ENCODE measurements at regions of chr3 and their contacts with region 1.

Region 1: DNA sequence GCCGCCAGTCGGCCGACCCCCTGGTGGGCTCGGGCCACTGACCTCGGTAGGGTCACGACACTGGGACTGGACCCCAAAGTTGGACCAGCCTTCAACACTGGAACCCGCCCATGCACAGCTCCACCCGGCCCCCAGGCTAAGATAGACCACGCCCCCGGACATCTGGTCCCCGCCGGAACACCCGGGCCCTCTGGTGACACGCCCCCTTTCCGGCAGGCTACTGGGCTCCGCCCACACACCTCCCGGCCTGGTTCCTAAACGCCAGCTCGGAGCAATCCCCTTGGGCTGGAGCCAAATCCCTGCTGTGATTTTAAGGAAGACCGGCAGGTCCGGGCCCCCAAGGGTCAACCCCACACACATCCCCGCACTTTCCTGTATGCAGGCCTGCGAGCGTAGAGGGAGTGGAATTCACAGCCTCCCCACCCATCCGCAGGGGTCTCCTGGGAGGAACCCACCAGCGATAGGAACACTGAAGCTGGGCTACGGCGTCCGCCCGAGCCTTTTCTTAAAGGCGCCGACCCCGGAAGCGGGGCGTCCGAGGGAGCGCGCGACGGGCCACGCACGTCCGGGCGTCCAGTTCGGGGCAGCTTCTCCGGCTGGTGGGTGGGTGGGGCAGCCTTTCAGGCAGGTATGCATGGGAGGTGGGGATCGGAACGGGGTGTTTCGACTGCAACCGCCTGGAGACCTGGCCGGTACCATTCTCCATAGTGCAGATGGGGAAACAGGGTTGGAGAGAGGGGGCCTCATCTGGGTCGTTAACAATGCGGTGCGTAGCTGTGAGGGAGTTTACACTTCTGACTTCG is at the start of gene HEMK1:
- DNase-seq: peak; percentile 96
- ATAC-seq: peak; percentile 77
- H3K4me3 ChIP-seq: peak within 1 kb of the TSS; percentile 69 to 93 (median 80)
- H3K4me3 Mint-ChIP-seq: peak within 1 kb of the TSS; percentile 98
- H3K27ac ChIP-seq: peak within 1 kb of the TSS; percentile 77 to 82
- H3K27ac Mint-ChIP-seq: peak within 1 kb of the TSS; percentile 96
- H3K4me1 ChIP-seq: peaks cover 16 to 39% of the 10 kb centered on the region in 2 donors
- H3K4me1 Mint-ChIP-seq: peaks cover 35% of the 10 kb centered on the region
- H3K27me3 ChIP-seq: no peaks in the 10 kb centered on the region
- H3K27me3 Mint-ChIP-seq: no peaks in the 10 kb centered on the region
- CTCF ChIP-seq: no peak
- total RNA-seq, gene HEMK1: 43.0 and 43.5 TPM in 2 replicates

Region 2: DNA sequence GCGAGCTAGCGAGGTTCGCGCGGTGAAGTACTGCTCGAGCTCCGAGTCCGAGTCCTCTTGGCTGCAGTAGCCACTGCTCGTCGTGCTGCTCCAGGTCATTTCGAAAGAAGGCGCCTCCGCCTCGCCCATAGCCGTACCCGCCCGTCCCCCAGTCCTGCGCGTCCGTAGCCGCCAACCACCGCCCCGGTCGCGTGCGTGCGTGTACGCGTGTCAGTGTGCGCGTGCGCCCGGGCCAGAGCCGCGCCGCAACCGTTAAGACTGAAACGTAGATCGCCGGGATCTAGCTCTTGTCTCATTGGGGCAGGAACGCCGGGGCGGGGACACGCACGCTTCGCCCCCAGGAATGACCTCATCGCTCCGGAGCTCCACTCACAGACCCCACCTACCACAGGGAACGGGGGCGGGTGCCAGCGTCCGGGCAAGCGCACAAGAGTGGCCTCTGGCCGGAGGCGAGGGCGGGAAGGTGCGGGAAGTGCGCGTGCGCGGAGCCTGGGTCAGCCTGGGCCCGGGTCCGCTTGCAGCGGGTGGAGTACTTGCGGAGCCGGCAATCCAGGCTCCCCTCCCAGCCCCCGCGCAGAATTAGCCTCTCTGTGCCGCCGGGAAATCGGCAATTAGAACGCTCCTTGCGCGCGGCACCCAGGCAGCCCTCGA is 231.8 kb before region 1 on chr3:
- CTCF ChIA-PET with region 1: no interaction called
- POLR2A ChIA-PET with region 1: interaction called, 14 read pairs
- intact Hi-C with region 1: no loop called
- DNase-seq: peak; percentile 97
- ATAC-seq: peak; percentile 84
- H3K4me3 ChIP-seq: peak overlapping the region; percentile 39 to 86 (median 68)
- H3K4me3 Mint-ChIP-seq: peak overlapping the region; percentile 96
- H3K27ac ChIP-seq: peak overlapping the region; percentile 97 to 98
- H3K27ac Mint-ChIP-seq: peak overlapping the region; percentile 99
- H3K4me1 ChIP-seq: peaks cover 37 to 74% of the 10 kb centered on the region in 2 donors
- H3K4me1 Mint-ChIP-seq: peaks cover 55% of the 10 kb centered on the region
- H3K27me3 ChIP-seq: no peaks in the 10 kb centered on the region
- H3K27me3 Mint-ChIP-seq: no peaks in the 10 kb centered on the region
- CTCF ChIP-seq: no peak

Region 3: DNA sequence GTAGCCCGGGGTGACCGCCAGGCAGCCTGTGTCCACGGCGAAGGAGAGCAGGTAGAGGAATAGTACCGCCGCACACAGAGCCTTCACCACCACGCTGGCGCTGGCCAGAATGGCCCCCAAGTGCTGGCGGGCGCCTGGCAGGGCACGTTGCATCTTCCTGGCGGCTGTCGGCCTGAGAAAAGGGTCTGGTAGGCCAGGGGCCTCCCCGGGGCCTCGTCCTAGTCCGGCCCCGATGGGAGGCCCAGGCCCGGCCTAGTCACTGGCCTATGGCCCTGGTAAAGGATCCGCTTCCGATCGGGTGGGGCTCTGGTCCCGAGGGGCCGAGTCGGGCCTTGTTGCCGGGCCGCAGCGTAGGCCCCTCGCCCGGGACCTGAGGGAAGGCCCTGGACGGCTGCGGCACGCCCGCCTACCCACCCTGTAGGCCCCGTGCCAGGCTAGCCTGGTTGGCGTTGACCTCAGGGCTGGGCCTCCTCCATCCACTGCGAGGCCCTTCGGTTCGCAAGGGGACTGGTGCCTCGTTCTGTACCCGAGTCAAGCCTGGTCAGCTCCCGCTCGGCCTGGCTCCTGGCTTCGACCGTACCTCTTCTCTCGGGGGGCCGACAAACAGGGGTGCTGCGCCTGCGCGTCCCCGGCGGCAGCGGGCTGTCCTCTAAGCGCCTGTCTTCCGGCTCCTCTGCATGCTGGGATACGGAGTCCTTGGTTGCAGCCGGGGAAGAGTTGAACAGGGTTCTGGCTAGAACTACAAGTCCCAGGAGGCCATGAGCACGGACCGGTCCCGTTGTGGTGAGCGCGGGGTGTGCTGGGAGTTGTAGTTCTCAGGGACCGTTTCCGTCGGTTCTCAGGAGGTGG is 210.0 kb before region 1 on chr3 and contains the start of gene TMEM115:
- CTCF ChIA-PET with region 1: no interaction called
- POLR2A ChIA-PET with region 1: no interaction called
- intact Hi-C with region 1: loop called (anchors 1 kb)
- DNase-seq: peak; percentile 96
- ATAC-seq: peak; percentile 100
- H3K4me3 ChIP-seq: peak within 1 kb of the TSS; percentile 19 to 93 (median 85)
- H3K4me3 Mint-ChIP-seq: peak within 1 kb of the TSS; percentile 99
- H3K27ac ChIP-seq: peak within 1 kb of the TSS; percentile 60 to 81
- H3K27ac Mint-ChIP-seq: peak within 1 kb of the TSS; percentile 96
- H3K4me1 ChIP-seq: peaks cover 28 to 40% of the 10 kb centered on the region in 2 donors
- H3K4me1 Mint-ChIP-seq: peaks cover 50% of the 10 kb centered on the region
- H3K27me3 ChIP-seq: no peaks in the 10 kb centered on the region
- H3K27me3 Mint-ChIP-seq: no peaks in the 10 kb centered on the region
- CTCF ChIP-seq: no peak
- total RNA-seq, gene TMEM115: 26.2 and 27.2 TPM in 2 replicates

Region 4: GRCh38 chr3:50519471-50520089 is 49.6 kb before region 1 on chr3:
- CTCF ChIA-PET with region 1: interaction called, 3 read pairs
- POLR2A ChIA-PET with region 1: interaction called, 3 read pairs
- intact Hi-C with region 1: loop called (anchors 5 kb)
- DNase-seq: peak; percentile 74
- ATAC-seq: peak; percentile 58
- H3K4me3 ChIP-seq: no peak overlapping the region
- H3K4me3 Mint-ChIP-seq: no peak overlapping the region
- H3K27ac ChIP-seq: no peak overlapping the region
- H3K27ac Mint-ChIP-seq: peak overlapping the region; percentile 33
- H3K4me1 ChIP-seq: peaks cover 26 to 34% of the 10 kb centered on the region in 2 donors
- H3K4me1 Mint-ChIP-seq: peaks cover 32% of the 10 kb centered on the region
- H3K27me3 ChIP-seq: peaks cover 0 to 4% (median 0%) of the 10 kb centered on the region in 4 experiments
- H3K27me3 Mint-ChIP-seq: peaks cover 5% of the 10 kb centered on the region
- CTCF ChIP-seq: peak; percentile 89

Region 5: GRCh38 chr3:50652709-50653108 is 83.6 kb after region 1 on chr3:
- CTCF ChIA-PET with region 1: interaction called, 31 read pairs
- POLR2A ChIA-PET with region 1: interaction called, 3 read pairs
- intact Hi-C with region 1: loop called (anchors 1 kb)
- DNase-seq: peak; percentile 56
- ATAC-seq: peak; percentile 68
- H3K4me3 ChIP-seq: no peak overlapping the region
- H3K4me3 Mint-ChIP-seq: no peak overlapping the region
- H3K27ac ChIP-seq: no peak overlapping the region
- H3K27ac Mint-ChIP-seq: no peak overlapping the region
- H3K4me1 ChIP-seq: no peaks in the 10 kb centered on the region
- H3K4me1 Mint-ChIP-seq: no peaks in the 10 kb centered on the region
- H3K27me3 ChIP-seq: no peaks in the 10 kb centered on the region
- H3K27me3 Mint-ChIP-seq: no peaks in the 10 kb centered on the region
- CTCF ChIP-seq: peak; percentile 27

Region 6: DNA sequence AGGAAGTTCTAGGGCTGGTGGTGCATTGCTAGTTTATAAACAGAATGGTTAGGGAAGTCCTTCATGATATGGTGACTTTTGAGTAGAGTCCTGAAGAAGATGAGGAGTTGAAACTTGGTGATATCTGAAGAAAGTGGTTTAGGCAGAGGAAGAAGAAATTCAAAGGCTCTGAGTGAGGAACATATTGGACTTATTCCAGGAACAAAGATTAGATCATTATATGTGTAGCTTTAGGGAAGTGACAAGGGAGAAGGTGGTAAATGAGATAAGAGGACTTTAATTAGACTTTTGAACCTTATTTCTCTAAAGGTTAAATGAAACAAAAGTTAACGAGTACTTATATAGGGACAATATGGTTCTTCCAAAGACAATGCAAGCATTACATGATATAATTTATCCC is 392.2 kb after region 1 on chr3:
- CTCF ChIA-PET with region 1: no interaction called
- POLR2A ChIA-PET with region 1: no interaction called
- intact Hi-C with region 1: no loop called
- DNase-seq: no peak
- ATAC-seq: no peak
- H3K4me3 ChIP-seq: no peak overlapping the region
- H3K4me3 Mint-ChIP-seq: no peak overlapping the region
- H3K27ac ChIP-seq: no peak overlapping the region
- H3K27ac Mint-ChIP-seq: no peak overlapping the region
- H3K4me1 ChIP-seq: no peaks in the 10 kb centered on the region
- H3K4me1 Mint-ChIP-seq: no peaks in the 10 kb centered on the region
- H3K27me3 ChIP-seq: peaks cover 0 to 12% (median 2%) of the 10 kb centered on the region in 4 experiments
- H3K27me3 Mint-ChIP-seq: peaks cover 25% of the 10 kb centered on the region
- CTCF ChIP-seq: no peak

Region 7: GRCh38 chr3:50978991-50979667 is 410.0 kb after region 1 on chr3:
- CTCF ChIA-PET with region 1: no interaction called
- POLR2A ChIA-PET with region 1: no interaction called
- intact Hi-C with region 1: no loop called
- DNase-seq: no peak
- ATAC-seq: no peak
- H3K4me3 ChIP-seq: no peak overlapping the region
- H3K4me3 Mint-ChIP-seq: no peak overlapping the region
- H3K27ac ChIP-seq: no peak overlapping the region
- H3K27ac Mint-ChIP-seq: no peak overlapping the region
- H3K4me1 ChIP-seq: no peaks in the 10 kb centered on the region
- H3K4me1 Mint-ChIP-seq: no peaks in the 10 kb centered on the region
- H3K27me3 ChIP-seq: peaks cover 0 to 4% (median 2%) of the 10 kb centered on the region in 4 experiments
- H3K27me3 Mint-ChIP-seq: peaks cover 31% of the 10 kb centered on the region
- CTCF ChIP-seq: no peak

Region 8: DNA sequence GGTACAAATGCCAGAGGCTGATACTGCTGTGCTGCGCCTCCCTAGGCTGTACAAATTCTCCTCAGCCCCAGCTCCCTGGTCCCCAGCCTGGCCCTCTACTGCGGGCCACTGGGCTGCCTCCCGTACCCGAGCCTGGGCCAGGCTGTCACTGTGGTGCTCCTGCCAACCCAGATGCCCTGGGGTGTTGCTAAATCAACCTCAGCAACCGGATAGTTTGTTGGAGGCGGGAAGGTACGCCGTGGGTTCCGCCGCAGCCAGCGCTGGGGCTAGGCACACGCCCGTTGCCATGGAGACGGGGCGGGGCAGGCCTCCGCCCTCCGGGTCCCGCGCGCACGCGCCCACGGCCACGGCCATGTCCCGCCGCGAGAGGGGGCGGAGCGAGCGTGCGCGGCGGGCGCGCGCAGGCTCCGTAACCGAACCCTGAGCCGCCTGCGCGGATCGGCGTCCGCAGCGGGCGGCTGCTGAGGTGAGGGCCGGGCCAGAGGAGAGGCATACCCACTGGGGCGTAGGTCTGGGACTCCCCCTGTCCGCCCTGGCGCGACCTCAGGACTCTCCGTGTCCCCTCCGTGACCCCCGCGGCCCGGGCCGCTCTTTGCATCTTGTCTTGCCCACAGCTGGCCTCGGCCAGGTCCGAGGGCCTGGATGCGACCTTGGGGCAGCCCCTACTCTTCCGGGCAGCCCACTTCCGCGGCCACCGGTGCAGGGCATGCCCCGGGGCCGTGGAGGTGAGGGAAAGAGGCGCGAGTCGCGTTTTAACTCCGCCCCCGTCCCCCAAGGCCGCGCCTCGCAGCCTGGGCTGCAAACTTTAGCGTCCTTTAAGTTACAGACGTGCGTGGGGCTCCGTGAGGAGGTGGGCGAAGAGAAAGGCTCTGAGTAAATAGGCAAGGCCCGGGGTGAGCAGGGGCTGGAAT is 1101.9 kb after region 1 on chr3 and contains the start of gene TEX264:
- CTCF ChIA-PET with region 1: no interaction called
- POLR2A ChIA-PET with region 1: no interaction called
- intact Hi-C with region 1: loop called (anchors 1 kb)
- DNase-seq: peak; percentile 97
- ATAC-seq: peak; percentile 85
- H3K4me3 ChIP-seq: peak within 1 kb of the TSS; percentile 46 to 99 (median 96)
- H3K4me3 Mint-ChIP-seq: peak within 1 kb of the TSS; percentile 91
- H3K27ac ChIP-seq: peak within 1 kb of the TSS; percentile 81 to 85
- H3K27ac Mint-ChIP-seq: peak within 1 kb of the TSS; percentile 92
- H3K4me1 ChIP-seq: peaks cover 25 to 55% of the 10 kb centered on the region in 2 donors
- H3K4me1 Mint-ChIP-seq: peaks cover 61% of the 10 kb centered on the region
- H3K27me3 ChIP-seq: no peaks in the 10 kb centered on the region
- H3K27me3 Mint-ChIP-seq: no peaks in the 10 kb centered on the region
- CTCF ChIP-seq: no peak
- total RNA-seq, gene TEX264: 31.8 and 39.1 TPM in 2 replicates